HEK293 (cell line): ENCODE measurements at regions of chr13 and their contacts with region 1.

Region 1: GRCh38 chr13:104773775-104774174 is 1707.6 kb upstream of the SLC10A2 start:
- H3K4me3 ChIP-seq: no peak overlapping the region
- H3K27ac ChIP-seq: no peak overlapping the region
- H3K4me1 ChIP-seq: no peaks in the 10 kb centered on the region
- CTCF ChIP-seq: no peak

Region 2: GRCh38 chr13:104657196-104657595 is 116.6 kb before region 1 on chr13:
- CTCF ChIA-PET with region 1: no interaction called
- POLR2A ChIA-PET with region 1: no interaction called
- H3K4me3 ChIP-seq: no peak overlapping the region
- H3K27ac ChIP-seq: no peak overlapping the region
- H3K4me1 ChIP-seq: no peaks in the 10 kb centered on the region
- CTCF ChIP-seq: no peak

Region 3: GRCh38 chr13:104757712-104758111 is 16.1 kb before region 1 on chr13:
- CTCF ChIA-PET with region 1: interaction called, 10 read pairs
- POLR2A ChIA-PET with region 1: no interaction called
- H3K4me3 ChIP-seq: no peak overlapping the region
- H3K27ac ChIP-seq: no peak overlapping the region
- H3K4me1 ChIP-seq: no peaks in the 10 kb centered on the region
- CTCF ChIP-seq: no peak